Endothelial cell of umbilical vein (primary cell): ENCODE measurements at regions of chr11 and their contacts with region 1.

Region 1: GRCh38 chr11:58286249-58286648 is 18.2 kb upstream of the OR10W1 start:
- DNase-seq: peak; percentile 53
- H3K4me3 ChIP-seq: no peak overlapping the region
- H3K27ac ChIP-seq: no peak overlapping the region
- H3K4me1 ChIP-seq: no peaks in the 10 kb centered on the region
- H3K27me3 ChIP-seq: no peaks in the 10 kb centered on the region
- CTCF ChIP-seq: peak; percentile 36 to 70
- POLR2A ChIP-seq: no peak

Region 2: GRCh38 chr11:57761301-57762234 is 524.7 kb before region 1 on chr11 and contains the start of gene CTNND1:
- CTCF ChIA-PET with region 1: interaction called, 4 read pairs
- POLR2A ChIA-PET with region 1: no interaction called
- dilution Hi-C with region 1: no loop called
- intact Hi-C with region 1: loop called (anchors 2 kb)
- DNase-seq: peak; percentile 97
- H3K4me3 ChIP-seq: peak within 1 kb of the TSS; percentile 68 to 98 (median 83)
- H3K27ac ChIP-seq: peak within 1 kb of the TSS; percentile 89
- H3K4me1 ChIP-seq: peaks cover 26% of the 10 kb centered on the region
- H3K27me3 ChIP-seq: no peaks in the 10 kb centered on the region
- CTCF ChIP-seq: no peak
- POLR2A ChIP-seq: peak; percentile 80
- total RNA-seq, gene CTNND1: 268 and 285 TPM in 2 replicates

Region 3: DNA sequence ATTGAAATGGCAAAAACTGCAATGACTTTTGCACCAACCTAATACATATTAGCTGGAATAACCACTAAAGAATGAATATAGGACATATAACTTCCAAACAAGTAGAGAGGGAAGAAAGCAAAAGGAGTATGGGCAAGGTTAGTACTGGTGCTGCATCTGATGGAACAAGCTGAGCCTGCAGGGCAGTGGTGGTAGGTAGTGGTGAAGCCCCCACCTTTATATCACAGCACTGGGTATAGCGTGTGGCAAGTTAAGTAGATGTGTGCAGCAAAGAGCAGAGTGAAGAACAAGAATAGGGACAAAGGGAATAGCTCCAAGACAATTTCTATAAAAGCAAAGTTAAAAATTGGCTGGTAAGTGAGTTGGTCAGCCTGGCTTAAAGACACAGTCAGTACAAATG is 462.4 kb before region 1 on chr11:
- CTCF ChIA-PET with region 1: interaction called, 18 read pairs
- POLR2A ChIA-PET with region 1: no interaction called
- dilution Hi-C with region 1: no loop called
- intact Hi-C with region 1: no loop called
- DNase-seq: no peak
- H3K4me3 ChIP-seq: no peak overlapping the region
- H3K27ac ChIP-seq: no peak overlapping the region
- H3K4me1 ChIP-seq: no peaks in the 10 kb centered on the region
- H3K27me3 ChIP-seq: no peaks in the 10 kb centered on the region
- CTCF ChIP-seq: no peak
- POLR2A ChIP-seq: no peak

Region 4: GRCh38 chr11:58301576-58301975 is 15.3 kb after region 1 on chr11:
- CTCF ChIA-PET with region 1: interaction called, 22 read pairs
- POLR2A ChIA-PET with region 1: no interaction called
- dilution Hi-C with region 1: no loop called
- intact Hi-C with region 1: no loop called
- DNase-seq: no peak
- H3K4me3 ChIP-seq: no peak overlapping the region
- H3K27ac ChIP-seq: no peak overlapping the region
- H3K4me1 ChIP-seq: no peaks in the 10 kb centered on the region
- H3K27me3 ChIP-seq: no peaks in the 10 kb centered on the region
- CTCF ChIP-seq: no peak
- POLR2A ChIP-seq: no peak

Region 5: DNA sequence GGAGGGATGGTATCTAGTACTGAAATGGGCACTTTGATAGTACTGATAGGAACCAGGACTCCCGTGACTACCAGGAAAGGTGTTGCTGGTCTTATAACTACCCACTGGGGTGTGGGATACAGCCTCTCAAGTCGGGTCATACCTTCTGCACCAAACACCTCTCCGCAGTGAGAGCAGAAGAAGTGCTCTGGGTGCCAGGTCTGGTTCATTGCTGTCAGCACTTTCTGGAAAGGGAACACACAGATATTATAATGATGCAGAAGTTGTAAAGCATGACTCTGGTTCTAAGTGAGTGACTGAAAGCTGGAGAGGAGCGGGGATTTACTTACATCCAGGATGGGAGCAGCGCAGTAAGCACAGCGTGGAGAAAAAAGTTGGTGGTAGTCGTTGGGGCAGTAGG is 263.4 kb after region 1 on chr11:
- CTCF ChIA-PET with region 1: no interaction called
- POLR2A ChIA-PET with region 1: no interaction called
- dilution Hi-C with region 1: no loop called
- intact Hi-C with region 1: no loop called
- DNase-seq: no peak
- H3K4me3 ChIP-seq: no peak overlapping the region
- H3K27ac ChIP-seq: no peak overlapping the region
- H3K4me1 ChIP-seq: no peaks in the 10 kb centered on the region
- H3K27me3 ChIP-seq: no peaks in the 10 kb centered on the region
- CTCF ChIP-seq: no peak
- POLR2A ChIP-seq: no peak

Region 6: DNA sequence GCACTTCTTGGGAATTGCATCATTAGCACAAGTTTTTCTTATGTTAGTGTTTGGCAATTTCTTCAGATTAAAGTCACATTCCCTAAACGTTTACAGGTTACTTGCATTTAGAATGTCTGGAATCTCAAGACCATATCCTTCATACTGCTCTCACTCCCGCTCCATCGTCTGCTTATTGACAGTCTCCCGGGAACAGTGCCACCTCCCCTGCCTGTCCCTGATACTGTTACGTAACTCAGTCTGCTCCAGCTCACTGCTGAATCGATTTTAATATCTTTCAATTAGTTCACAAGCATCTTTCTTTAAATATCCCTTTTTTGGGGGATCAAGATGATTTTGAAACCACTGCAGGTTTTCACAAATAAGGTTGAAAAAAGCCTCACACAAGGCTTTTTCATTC is 510.1 kb after region 1 on chr11:
- CTCF ChIA-PET with region 1: no interaction called
- POLR2A ChIA-PET with region 1: no interaction called
- dilution Hi-C with region 1: no loop called
- intact Hi-C with region 1: no loop called
- DNase-seq: no peak
- H3K4me3 ChIP-seq: no peak overlapping the region
- H3K27ac ChIP-seq: no peak overlapping the region
- H3K4me1 ChIP-seq: no peaks in the 10 kb centered on the region
- H3K27me3 ChIP-seq: no peaks in the 10 kb centered on the region
- CTCF ChIP-seq: no peak
- POLR2A ChIP-seq: no peak